HepG2 (cell line): ENCODE measurements at regions of chr3 and their contacts with region 1.

Region 1: GRCh38 chr3:129490242-129491045 is 38.0 kb upstream of the RHO start:
- DNase-seq: peak; percentile 83
- ATAC-seq: peak; percentile 94
- H3K4me3 ChIP-seq: no peak overlapping the region
- H3K27ac ChIP-seq: peak overlapping the region; percentile 23
- H3K4me1 ChIP-seq: peaks cover 31% of the 10 kb centered on the region
- H3K27me3 ChIP-seq: no peaks in the 10 kb centered on the region
- CTCF ChIP-seq: peak; percentile 96
- EP300 ChIP-seq: no peak
- POLR2A ChIP-seq: no peak
- RAD21 ChIP-seq: peak; percentile 97

Region 2: GRCh38 chr3:129549412-129550204 is 59.2 kb after region 1 on chr3:
- CTCF ChIA-PET with region 1: interaction called, 4 read pairs
- POLR2A ChIA-PET with region 1: interaction called, 3 read pairs
- in situ Hi-C with region 1: loop called (anchors 5 kb)
- intact Hi-C with region 1: loop called (anchors 10 kb)
- DNase-seq: no peak
- ATAC-seq: no peak
- H3K4me3 ChIP-seq: no peak overlapping the region
- H3K27ac ChIP-seq: no peak overlapping the region
- H3K4me1 ChIP-seq: peaks cover 56% of the 10 kb centered on the region
- H3K27me3 ChIP-seq: 0 out of 5 replicates have a peak, but pooled peaks cover 0 to under 1% of the 10 kb centered on the region in 2 experiments
- CTCF ChIP-seq: no peak
- EP300 ChIP-seq: no peak
- POLR2A ChIP-seq: no peak
- RAD21 ChIP-seq: no peak

Region 3: DNA sequence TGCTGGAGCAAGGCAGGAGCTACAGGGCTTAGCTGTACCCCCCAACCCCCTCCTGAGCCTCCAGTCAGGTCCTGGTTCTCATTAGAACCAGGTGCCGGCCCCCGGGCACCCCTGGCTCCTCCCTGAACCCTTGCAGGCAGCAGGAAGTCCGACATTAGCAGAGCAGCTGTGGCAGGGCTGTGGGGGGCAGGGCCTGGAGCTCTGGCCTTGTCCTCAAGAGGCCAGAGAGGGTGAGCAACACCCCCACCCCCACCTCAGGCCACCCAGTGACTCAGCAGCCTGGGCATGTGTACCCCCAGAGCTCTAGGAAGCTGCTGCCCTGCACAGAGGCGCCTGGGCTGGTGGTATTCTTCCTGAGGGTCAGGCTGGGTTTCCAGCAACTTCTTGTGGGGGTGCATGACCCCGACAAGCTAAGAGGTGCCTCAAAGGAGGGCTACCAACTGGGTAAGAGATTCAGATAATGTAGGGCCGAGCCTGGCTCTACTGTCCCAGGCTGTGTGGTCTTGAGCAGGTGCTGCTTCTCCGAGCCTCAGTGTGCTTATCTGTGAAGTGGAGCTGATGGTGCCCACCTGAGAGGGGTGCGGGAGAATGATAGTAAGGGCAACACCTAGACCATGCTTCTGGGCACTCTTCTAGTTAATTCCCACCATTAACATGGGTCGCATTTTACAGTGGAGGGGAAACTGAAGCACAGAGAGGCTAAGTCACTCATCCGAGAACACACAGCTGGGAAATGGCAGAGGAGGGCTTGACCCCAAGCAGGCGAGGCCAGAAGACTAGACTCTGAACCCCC is 68.5 kb after region 1 on chr3:
- CTCF ChIA-PET with region 1: interaction called, 3 read pairs
- POLR2A ChIA-PET with region 1: interaction called, 3 read pairs
- in situ Hi-C with region 1: loop called (anchors 5 kb)
- intact Hi-C with region 1: loop called (anchors 10 kb)
- DNase-seq: peak; percentile 74
- ATAC-seq: peak; percentile 70
- H3K4me3 ChIP-seq: no peak overlapping the region; a peak in 1 of 6 replicates
- H3K27ac ChIP-seq: peak overlapping the region; percentile 69
- H3K4me1 ChIP-seq: peaks cover 34% of the 10 kb centered on the region
- H3K27me3 ChIP-seq: no peaks in the 10 kb centered on the region; a peak in 1 of 5 replicates
- CTCF ChIP-seq: no peak
- EP300 ChIP-seq: peak; percentile 52 to 70; a peak in 3 of 4 replicates
- POLR2A ChIP-seq: no peak
- RAD21 ChIP-seq: peak; percentile 25; the same call in 1 of the 2 replicates

Region 4: GRCh38 chr3:129824926-129825541 is 334.6 kb after region 1 on chr3:
- CTCF ChIA-PET with region 1: interaction called, 10 read pairs
- POLR2A ChIA-PET with region 1: interaction called, 4 read pairs
- in situ Hi-C with region 1: no loop called
- intact Hi-C with region 1: loop called (anchors 1 kb)
- DNase-seq: peak; percentile 62
- ATAC-seq: peak; percentile 75
- H3K4me3 ChIP-seq: no peak overlapping the region
- H3K27ac ChIP-seq: no peak overlapping the region
- H3K4me1 ChIP-seq: peaks cover 20% of the 10 kb centered on the region
- H3K27me3 ChIP-seq: no peaks in the 10 kb centered on the region
- CTCF ChIP-seq: peak; percentile 83
- EP300 ChIP-seq: no peak
- POLR2A ChIP-seq: no peak
- RAD21 ChIP-seq: peak; percentile 72

Region 5: DNA sequence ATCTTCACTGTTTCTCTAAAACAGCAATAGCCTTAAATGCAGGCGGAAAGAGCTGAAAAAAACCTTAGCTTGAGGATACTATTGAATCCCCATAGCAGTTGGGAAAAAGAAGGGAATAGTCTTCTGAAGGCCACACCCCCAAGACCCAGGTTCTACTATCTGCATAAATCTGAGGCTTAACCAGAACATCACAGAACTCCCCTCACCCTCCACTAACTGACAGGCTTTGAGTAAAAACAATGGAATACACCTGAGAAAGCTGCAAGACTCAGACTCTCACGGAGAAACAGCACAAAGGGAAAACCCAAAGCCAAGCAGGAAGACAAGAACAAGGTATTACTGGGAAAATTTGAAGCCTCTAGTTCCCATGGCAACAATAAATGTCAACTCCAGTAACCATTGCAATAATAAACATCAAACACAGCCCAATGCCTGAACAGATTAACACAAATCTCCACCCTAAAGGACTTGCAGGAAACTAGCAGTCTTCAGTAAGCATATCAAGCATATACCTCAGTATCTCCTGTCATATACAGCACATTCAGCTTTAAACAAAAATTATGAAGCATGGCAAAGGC is 346.7 kb after region 1 on chr3:
- CTCF ChIA-PET with region 1: no interaction called
- POLR2A ChIA-PET with region 1: no interaction called
- in situ Hi-C with region 1: loop called (anchors 5 kb)
- intact Hi-C with region 1: no loop called
- DNase-seq: no peak
- ATAC-seq: no peak
- H3K4me3 ChIP-seq: no peak overlapping the region
- H3K27ac ChIP-seq: no peak overlapping the region
- H3K4me1 ChIP-seq: peaks cover 18% of the 10 kb centered on the region
- H3K27me3 ChIP-seq: no peaks in the 10 kb centered on the region
- CTCF ChIP-seq: no peak
- EP300 ChIP-seq: no peak
- POLR2A ChIP-seq: no peak
- RAD21 ChIP-seq: no peak